Activated B cell treated with CpG ODN at 0.5 μM for 24 hours (primary cell): ENCODE measurements at regions of chr5 and their contacts with region 1.

Region 1: DNA sequence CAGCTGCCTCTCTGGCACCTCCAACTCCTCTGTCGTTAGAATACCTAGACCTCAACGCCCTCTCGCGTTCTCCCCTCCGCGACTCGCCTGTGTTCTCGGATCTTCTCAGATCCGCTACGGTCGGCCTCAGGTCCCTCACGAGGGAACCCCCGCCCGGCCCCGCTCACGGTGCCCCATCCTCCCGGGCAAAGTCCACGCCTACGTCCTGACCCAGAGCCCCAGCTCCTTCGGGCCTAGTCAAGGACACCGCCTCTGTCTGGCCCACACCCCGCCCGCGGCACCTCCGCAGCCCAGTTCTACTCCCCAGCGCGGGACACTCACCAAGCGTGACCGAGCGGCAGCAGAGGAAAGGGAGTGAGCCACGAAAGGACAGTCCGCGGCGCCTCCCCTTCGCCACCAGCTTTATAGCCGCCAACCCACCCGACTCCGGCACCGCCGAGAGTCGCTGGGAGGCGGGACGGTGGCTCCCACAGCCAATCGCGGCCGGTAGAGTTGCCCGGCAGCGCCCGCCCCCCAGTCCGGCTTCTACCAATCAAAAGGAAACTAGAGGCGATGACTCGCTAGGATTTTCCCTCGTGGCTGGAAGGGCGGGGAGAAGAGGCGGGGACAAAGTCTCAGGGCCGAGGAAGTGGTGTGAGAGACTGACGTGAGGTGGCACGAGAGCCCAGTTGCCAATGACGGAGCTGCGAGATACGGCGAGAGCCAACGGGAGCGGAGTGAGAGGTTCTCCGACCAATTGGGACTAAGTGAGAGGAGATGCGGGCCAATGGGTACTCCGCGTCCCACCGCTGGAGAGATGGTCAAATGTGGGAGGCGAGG is at the start of gene HMGCS1:
- DNase-seq: peak; percentile 98
- ATAC-seq: peak; percentile 86
- H3K4me3 Mint-ChIP-seq: peak within 1 kb of the TSS; percentile 99
- H3K27ac Mint-ChIP-seq: peak within 1 kb of the TSS; percentile 95
- H3K4me1 Mint-ChIP-seq: peaks cover 55% of the 10 kb centered on the region
- H3K27me3 Mint-ChIP-seq: no peaks in the 10 kb centered on the region
- CTCF ChIP-seq: no peak
- total RNA-seq, gene HMGCS1: 133 and 160 TPM in 2 replicates

Region 2: DNA sequence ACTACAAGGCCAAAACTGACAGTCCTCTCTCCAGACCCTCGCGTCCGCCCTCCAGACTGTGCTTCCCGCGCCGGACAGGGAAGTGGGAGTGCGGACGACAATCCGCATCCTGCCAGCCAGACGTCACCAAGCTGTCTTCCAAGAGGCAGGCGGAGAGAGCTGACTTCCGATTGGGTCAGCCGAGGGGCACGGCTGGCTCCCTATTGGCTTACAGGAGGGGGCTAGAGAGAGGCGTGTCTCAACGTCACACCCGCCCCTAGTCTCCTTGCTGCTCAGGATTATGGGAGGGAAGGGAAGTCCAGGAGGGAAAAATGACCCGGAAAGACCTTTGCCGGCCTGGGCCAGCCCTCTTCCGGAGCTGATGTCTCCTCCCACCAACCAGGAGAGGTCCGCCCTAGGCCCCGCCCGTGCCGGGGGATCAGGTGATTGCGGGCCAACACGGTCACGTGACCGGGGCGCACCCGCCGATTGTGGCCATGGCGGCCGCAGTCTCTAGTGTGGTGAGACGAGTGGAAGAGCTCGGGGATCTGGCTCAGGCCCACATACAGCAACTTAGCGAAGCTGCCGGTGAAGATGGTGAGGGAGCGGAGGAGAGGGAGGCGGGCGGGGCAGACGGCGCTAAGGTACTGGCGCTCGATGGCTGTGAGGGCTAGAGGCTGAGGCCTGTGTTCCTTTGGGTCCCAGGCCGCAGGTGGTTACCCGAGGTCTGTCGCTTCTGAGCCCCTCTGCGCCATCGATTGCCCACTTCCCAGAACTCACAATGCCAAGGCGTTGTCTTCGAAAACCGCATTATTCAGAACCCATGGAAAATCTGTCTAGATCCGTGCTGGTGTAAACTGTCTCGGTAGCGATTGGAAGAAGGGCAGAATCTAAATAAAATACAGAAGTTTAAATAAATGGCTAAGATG is 1409.1 kb before region 1 on chr5 and contains the start of gene RIMOC1:
- CTCF ChIA-PET with region 1: no interaction called
- POLR2A ChIA-PET with region 1: interaction called, 6 read pairs
- intact Hi-C with region 1: loop called (anchors 2 kb)
- DNase-seq: peak; percentile 97
- ATAC-seq: peak; percentile 92
- H3K4me3 Mint-ChIP-seq: peak within 1 kb of the TSS; percentile 99
- H3K27ac Mint-ChIP-seq: peak within 1 kb of the TSS; percentile 99
- H3K4me1 Mint-ChIP-seq: peaks cover 34% of the 10 kb centered on the region
- H3K27me3 Mint-ChIP-seq: peaks cover 4% of the 10 kb centered on the region
- CTCF ChIP-seq: no peak
- total RNA-seq, gene RIMOC1: 26.0 and 30.2 TPM in 2 replicates

Region 3: GRCh38 chr5:42994246-42995151 is 318.7 kb before region 1 on chr5:
- CTCF ChIA-PET with region 1: no interaction called
- POLR2A ChIA-PET with region 1: interaction called, 43 read pairs
- intact Hi-C with region 1: loop called (anchors 1 kb)
- DNase-seq: peak; percentile 72
- ATAC-seq: peak; percentile 66
- H3K4me3 Mint-ChIP-seq: peak overlapping the region; percentile 99
- H3K27ac Mint-ChIP-seq: peak overlapping the region; percentile 100
- H3K4me1 Mint-ChIP-seq: peaks cover 34% of the 10 kb centered on the region
- H3K27me3 Mint-ChIP-seq: peaks cover under 1% of the 10 kb centered on the region
- CTCF ChIP-seq: peak; percentile 89

Region 4: GRCh38 chr5:43066799-43067741 is 246.2 kb before region 1 on chr5:
- CTCF ChIA-PET with region 1: no interaction called
- POLR2A ChIA-PET with region 1: interaction called, 24 read pairs
- intact Hi-C with region 1: loop called (anchors 1 kb)
- DNase-seq: peak; percentile 83
- ATAC-seq: peak; percentile 55
- H3K4me3 Mint-ChIP-seq: peak overlapping the region; percentile 95
- H3K27ac Mint-ChIP-seq: peak overlapping the region; percentile 99
- H3K4me1 Mint-ChIP-seq: peaks cover 40% of the 10 kb centered on the region
- H3K27me3 Mint-ChIP-seq: no peaks in the 10 kb centered on the region
- CTCF ChIP-seq: no peak

Region 5: GRCh38 chr5:43294226-43294625 is 19.0 kb before region 1 on chr5:
- CTCF ChIA-PET with region 1: interaction called, 6 read pairs
- POLR2A ChIA-PET with region 1: interaction called, 5 read pairs
- intact Hi-C with region 1: loop called (anchors 2 kb)
- DNase-seq: no peak
- ATAC-seq: no peak
- H3K4me3 Mint-ChIP-seq: no peak overlapping the region
- H3K27ac Mint-ChIP-seq: no peak overlapping the region
- H3K4me1 Mint-ChIP-seq: no peaks in the 10 kb centered on the region
- H3K27me3 Mint-ChIP-seq: no peaks in the 10 kb centered on the region
- CTCF ChIP-seq: no peak

Region 6: GRCh38 chr5:43453606-43454005 is 140.4 kb after region 1 on chr5:
- CTCF ChIA-PET with region 1: no interaction called
- POLR2A ChIA-PET with region 1: no interaction called
- intact Hi-C with region 1: no loop called
- DNase-seq: no peak
- ATAC-seq: no peak
- H3K4me3 Mint-ChIP-seq: no peak overlapping the region
- H3K27ac Mint-ChIP-seq: no peak overlapping the region
- H3K4me1 Mint-ChIP-seq: no peaks in the 10 kb centered on the region
- H3K27me3 Mint-ChIP-seq: no peaks in the 10 kb centered on the region
- CTCF ChIP-seq: no peak

Region 7: GRCh38 chr5:43556857-43557542 is 243.8 kb after region 1 on chr5 and contains the start of gene PAIP1:
- CTCF ChIA-PET with region 1: no interaction called
- POLR2A ChIA-PET with region 1: no interaction called
- intact Hi-C with region 1: loop called (anchors 1 kb)
- DNase-seq: peak; percentile 90
- ATAC-seq: peak; percentile 93
- H3K4me3 Mint-ChIP-seq: peak within 1 kb of the TSS; percentile 89
- H3K27ac Mint-ChIP-seq: peak within 1 kb of the TSS; percentile 94
- H3K4me1 Mint-ChIP-seq: peaks cover 21% of the 10 kb centered on the region
- H3K27me3 Mint-ChIP-seq: no peaks in the 10 kb centered on the region
- CTCF ChIP-seq: peak; percentile 41
- total RNA-seq, gene PAIP1: 35.1 and 38.3 TPM in 2 replicates

Region 8: DNA sequence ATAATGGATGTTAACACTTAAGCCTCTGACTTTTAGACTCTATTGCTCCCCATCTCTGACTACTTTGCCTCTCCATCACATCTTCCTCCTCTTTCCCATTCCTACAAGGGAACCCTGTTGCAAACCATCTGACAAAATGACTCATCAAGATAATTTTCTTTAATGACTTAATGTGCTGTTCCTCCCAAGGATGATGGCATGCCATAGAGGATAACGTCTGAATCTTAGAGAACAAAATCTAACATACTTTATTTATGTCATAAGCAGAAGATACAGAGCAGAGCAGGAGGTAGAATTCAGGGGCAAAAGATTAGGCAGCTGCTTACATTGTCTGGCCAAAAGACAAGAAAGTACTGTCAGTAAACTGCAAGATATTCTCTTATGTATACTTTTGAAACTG is 999.1 kb after region 1 on chr5:
- CTCF ChIA-PET with region 1: no interaction called
- POLR2A ChIA-PET with region 1: no interaction called
- intact Hi-C with region 1: no loop called
- DNase-seq: no peak
- ATAC-seq: no peak
- H3K4me3 Mint-ChIP-seq: no peak overlapping the region
- H3K27ac Mint-ChIP-seq: no peak overlapping the region
- H3K4me1 Mint-ChIP-seq: no peaks in the 10 kb centered on the region
- H3K27me3 Mint-ChIP-seq: no peaks in the 10 kb centered on the region
- CTCF ChIP-seq: no peak